Activated naive CD4-positive, alpha-beta T cell treated with anti-CD3 and anti-CD28 coated beads for 36 hours (primary cell): ENCODE measurements at regions of chr7 and their contacts with region 1.

Region 1: DNA sequence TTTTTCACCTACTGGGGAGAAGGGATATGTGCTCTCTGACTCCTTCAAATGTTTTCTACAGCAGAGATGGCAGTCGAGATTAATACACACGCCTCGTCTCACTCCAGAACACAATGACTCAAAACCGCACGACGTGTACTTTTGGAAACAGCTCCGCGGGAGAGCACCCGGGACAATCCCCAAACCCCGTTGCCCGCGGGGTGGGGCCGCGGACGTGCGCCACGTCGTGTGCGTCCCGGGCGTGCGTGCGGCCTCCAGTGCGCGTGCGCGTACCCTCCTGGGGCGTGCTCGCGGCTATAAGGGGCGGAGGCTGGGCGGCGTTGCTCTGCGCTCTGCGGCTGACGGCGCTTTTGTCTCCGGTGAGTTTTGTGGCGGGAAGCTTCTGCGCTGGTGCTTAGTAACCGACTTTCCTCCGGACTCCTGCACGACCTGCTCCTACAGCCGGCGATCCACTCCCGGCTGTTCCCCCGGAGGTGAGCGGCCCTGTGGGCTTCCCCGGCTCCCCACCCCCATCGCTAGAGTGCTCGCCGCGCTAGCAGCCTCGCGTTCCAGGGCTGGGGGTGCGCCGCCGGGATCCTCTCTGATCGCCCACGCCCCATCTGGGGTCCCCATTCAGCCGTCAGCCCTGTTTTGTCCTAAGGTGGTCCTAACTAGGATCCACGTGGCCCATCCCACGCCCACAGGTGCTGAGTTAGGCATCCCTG is at the start of gene HILPDA:
- DNase-seq: peak; percentile 96
- H3K4me3 Mint-ChIP-seq: peak within 1 kb of the TSS; percentile 96
- H3K27ac Mint-ChIP-seq: peak within 1 kb of the TSS; percentile 96
- H3K4me1 Mint-ChIP-seq: peaks cover 55% of the 10 kb centered on the region
- H3K27me3 Mint-ChIP-seq: peaks cover 8% of the 10 kb centered on the region
- total RNA-seq, gene HILPDA: 12.4 to 13.6 TPM

Region 2: DNA sequence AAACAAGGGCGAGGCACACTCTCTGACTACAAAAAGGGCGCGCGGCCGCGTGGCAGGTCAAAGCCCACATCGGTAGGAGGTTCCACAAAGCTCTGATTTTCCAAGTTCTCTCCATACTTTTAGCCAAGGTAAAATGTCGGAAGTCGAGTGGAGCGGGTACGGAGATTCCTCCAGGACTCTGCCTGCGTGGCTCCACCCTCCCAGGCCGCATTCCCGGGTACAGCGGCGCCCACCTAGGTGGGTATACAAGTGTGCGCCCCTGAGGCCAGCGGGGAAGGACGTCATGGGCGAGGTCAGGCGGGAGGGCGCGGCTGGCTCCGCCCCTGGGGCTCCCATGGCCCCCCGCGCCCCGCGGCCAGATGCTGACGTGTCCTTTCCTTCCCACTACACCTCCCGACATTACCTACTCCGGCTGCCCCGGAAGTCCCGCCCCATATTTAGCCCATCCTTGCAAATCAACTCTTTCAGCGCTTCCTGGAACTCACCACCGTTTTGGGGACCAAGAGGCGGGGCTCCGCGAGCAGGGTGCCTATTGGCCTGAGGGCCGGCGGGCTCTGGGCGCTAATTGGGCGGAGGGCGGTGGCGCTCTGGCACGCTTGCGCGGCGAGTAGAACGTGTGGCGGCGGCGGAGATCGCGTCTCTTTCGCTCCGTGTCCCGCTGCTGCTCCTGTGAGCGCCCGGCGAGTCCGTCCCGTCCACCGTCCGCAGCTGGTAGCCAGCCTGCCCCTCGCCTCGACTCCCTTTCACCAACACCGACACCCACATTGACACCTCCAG is 804.0 kb before region 1 on chr7 and contains the start of gene SND1:
- CTCF ChIA-PET with region 1: no interaction called
- intact Hi-C with region 1: loop called (anchors 1 kb)
- DNase-seq: peak; percentile 99
- H3K4me3 Mint-ChIP-seq: peak within 1 kb of the TSS; percentile 99
- H3K27ac Mint-ChIP-seq: peak within 1 kb of the TSS; percentile 91
- H3K4me1 Mint-ChIP-seq: peaks cover 33% of the 10 kb centered on the region
- H3K27me3 Mint-ChIP-seq: no peaks in the 10 kb centered on the region
- total RNA-seq, gene SND1: 184 to 211 TPM

Region 3: GRCh38 chr7:128398016-128398840 is 57.5 kb before region 1 on chr7:
- CTCF ChIA-PET with region 1: interaction called, 13 read pairs
- intact Hi-C with region 1: loop called (anchors 1 kb)
- DNase-seq: peak; percentile 65
- H3K4me3 Mint-ChIP-seq: no peak overlapping the region
- H3K27ac Mint-ChIP-seq: no peak overlapping the region
- H3K4me1 Mint-ChIP-seq: peaks cover 7% of the 10 kb centered on the region
- H3K27me3 Mint-ChIP-seq: no peaks in the 10 kb centered on the region

Region 4: DNA sequence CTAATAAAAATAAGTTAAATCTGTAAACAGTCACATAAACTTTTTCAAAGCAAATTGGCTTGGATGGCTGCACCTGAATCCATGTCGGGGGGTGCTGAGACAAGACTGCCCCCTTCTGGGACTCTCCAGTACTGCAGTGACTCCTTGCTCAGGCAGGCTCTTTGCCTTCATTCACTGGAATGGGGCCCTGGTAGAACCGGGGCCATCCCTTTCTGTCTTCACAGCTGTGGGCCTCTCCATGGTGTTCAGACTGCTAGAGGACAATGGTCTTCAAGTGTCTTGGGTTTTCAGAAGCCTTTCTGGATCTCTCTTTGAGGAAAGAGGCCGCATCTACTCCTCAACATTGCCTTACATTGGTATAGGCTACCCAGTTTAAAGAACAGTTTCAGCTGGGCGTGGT is 29.9 kb before region 1 on chr7:
- CTCF ChIA-PET with region 1: interaction called, 251 read pairs
- intact Hi-C with region 1: loop called (anchors 1 kb)
- DNase-seq: peak; percentile 93
- H3K4me3 Mint-ChIP-seq: no peak overlapping the region
- H3K27ac Mint-ChIP-seq: no peak overlapping the region
- H3K4me1 Mint-ChIP-seq: no peaks in the 10 kb centered on the region
- H3K27me3 Mint-ChIP-seq: peaks cover 3% of the 10 kb centered on the region

Region 5: GRCh38 chr7:128443831-128444600 is 11.7 kb before region 1 on chr7:
- CTCF ChIA-PET with region 1: interaction called, 23 read pairs
- intact Hi-C with region 1: no loop called
- DNase-seq: no peak
- H3K4me3 Mint-ChIP-seq: no peak overlapping the region
- H3K27ac Mint-ChIP-seq: no peak overlapping the region
- H3K4me1 Mint-ChIP-seq: peaks cover 3% of the 10 kb centered on the region
- H3K27me3 Mint-ChIP-seq: no peaks in the 10 kb centered on the region

Region 6: GRCh38 chr7:128739048-128739962 is 283.6 kb after region 1 on chr7 and contains the start of gene CALU:
- CTCF ChIA-PET with region 1: no interaction called
- intact Hi-C with region 1: loop called (anchors 1 kb)
- DNase-seq: peak; percentile 97
- H3K4me3 Mint-ChIP-seq: peak within 1 kb of the TSS; percentile 99
- H3K27ac Mint-ChIP-seq: peak within 1 kb of the TSS; percentile 96
- H3K4me1 Mint-ChIP-seq: peaks cover 43% of the 10 kb centered on the region
- H3K27me3 Mint-ChIP-seq: no peaks in the 10 kb centered on the region
- total RNA-seq, gene CALU: 33.0 to 35.4 TPM

Region 7: GRCh38 chr7:128812514-128813168 is 356.9 kb after region 1 on chr7:
- CTCF ChIA-PET with region 1: no interaction called
- intact Hi-C with region 1: no loop called
- DNase-seq: no peak
- H3K4me3 Mint-ChIP-seq: no peak overlapping the region
- H3K27ac Mint-ChIP-seq: no peak overlapping the region
- H3K4me1 Mint-ChIP-seq: no peaks in the 10 kb centered on the region
- H3K27me3 Mint-ChIP-seq: no peaks in the 10 kb centered on the region

Region 8: GRCh38 chr7:128963327-128963757 is 507.6 kb after region 1 on chr7:
- CTCF ChIA-PET with region 1: no interaction called
- intact Hi-C with region 1: loop called (anchors 2 kb)
- DNase-seq: peak; percentile 80
- H3K4me3 Mint-ChIP-seq: peak overlapping the region; percentile 6
- H3K27ac Mint-ChIP-seq: peak overlapping the region; percentile 87
- H3K4me1 Mint-ChIP-seq: peaks cover 35% of the 10 kb centered on the region
- H3K27me3 Mint-ChIP-seq: no peaks in the 10 kb centered on the region

Region 9: GRCh38 chr7:129553861-129554530 is 1098.3 kb after region 1 on chr7:
- CTCF ChIA-PET with region 1: no interaction called
- intact Hi-C with region 1: no loop called
- DNase-seq: peak; percentile 72
- H3K4me3 Mint-ChIP-seq: peak overlapping the region; percentile 27
- H3K27ac Mint-ChIP-seq: no peak overlapping the region
- H3K4me1 Mint-ChIP-seq: peaks cover 4% of the 10 kb centered on the region
- H3K27me3 Mint-ChIP-seq: no peaks in the 10 kb centered on the region